ENCODE measurements at regions of chr7 and their contacts with region 1.

Region 1: DNA sequence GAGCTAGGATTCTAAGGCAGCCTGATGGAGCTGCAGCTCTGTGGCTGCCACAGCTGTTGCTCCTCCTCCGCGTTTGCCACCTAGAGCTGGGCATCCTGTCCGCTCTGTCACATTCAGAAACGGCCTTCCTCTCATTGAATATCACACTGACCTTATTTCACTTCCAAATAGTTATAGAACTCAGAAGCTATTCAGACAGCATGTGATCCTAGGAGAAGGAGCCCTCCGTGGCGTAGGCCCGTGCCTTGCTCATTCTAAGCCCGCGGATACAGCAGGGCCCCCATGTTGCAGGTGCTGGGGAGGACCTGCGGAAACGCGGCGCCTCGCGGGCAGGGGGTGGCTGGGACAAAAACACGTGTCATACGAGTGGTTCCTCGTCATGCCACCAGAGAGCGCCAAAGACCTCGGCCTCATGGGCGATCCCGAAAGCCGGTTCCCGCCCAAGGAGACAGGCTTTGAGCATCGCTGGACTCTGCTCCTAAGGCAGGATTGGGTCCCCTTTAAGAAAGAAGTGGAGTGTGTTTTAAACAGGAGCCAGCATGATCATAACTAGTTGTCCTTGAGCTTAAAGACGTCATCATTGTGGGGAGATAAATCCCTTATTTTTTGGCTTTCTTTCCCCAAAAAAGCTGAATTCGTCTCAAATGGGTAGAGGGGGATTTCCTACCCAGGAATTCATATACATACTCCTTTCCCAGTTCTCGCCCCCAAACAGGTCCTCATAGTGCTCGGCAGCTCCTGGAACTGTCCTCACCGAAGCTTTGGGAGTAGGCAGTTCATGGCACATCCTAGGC is 17.9 kb upstream of the FIGNL1 start:
- DNase-seq: peak; percentile 93
- H3K4me3 Mint-ChIP-seq: peak overlapping the region; percentile 25
- H3K27ac Mint-ChIP-seq: peak overlapping the region; percentile 13
- H3K4me1 Mint-ChIP-seq: no peaks in the 10 kb centered on the region
- H3K27me3 Mint-ChIP-seq: no peaks in the 10 kb centered on the region
- CTCF ChIP-seq: peak; percentile 96

Region 2: GRCh38 chr7:50577569-50577968 is 109.6 kb after region 1 on chr7:
- CTCF ChIA-PET with region 1: no interaction called
- intact Hi-C with region 1: no loop called
- DNase-seq: no peak
- H3K4me3 Mint-ChIP-seq: no peak overlapping the region
- H3K27ac Mint-ChIP-seq: no peak overlapping the region
- H3K4me1 Mint-ChIP-seq: no peaks in the 10 kb centered on the region
- H3K27me3 Mint-ChIP-seq: peaks cover 23% of the 10 kb centered on the region
- CTCF ChIP-seq: no peak

Region 3: GRCh38 chr7:50595491-50596102 is 127.6 kb after region 1 on chr7:
- CTCF ChIA-PET with region 1: interaction called, 6 read pairs
- intact Hi-C with region 1: loop called (anchors 2 kb)
- DNase-seq: peak; percentile 36
- H3K4me3 Mint-ChIP-seq: no peak overlapping the region
- H3K27ac Mint-ChIP-seq: no peak overlapping the region
- H3K4me1 Mint-ChIP-seq: peaks cover 15% of the 10 kb centered on the region
- H3K27me3 Mint-ChIP-seq: no peaks in the 10 kb centered on the region
- CTCF ChIP-seq: peak; percentile 32

Region 4: GRCh38 chr7:50632561-50633413 is 164.8 kb after region 1 on chr7:
- CTCF ChIA-PET with region 1: interaction called, 9 read pairs
- intact Hi-C with region 1: loop called (anchors 1 kb)
- DNase-seq: peak; percentile 80
- H3K4me3 Mint-ChIP-seq: no peak overlapping the region
- H3K27ac Mint-ChIP-seq: peak overlapping the region; percentile 23
- H3K4me1 Mint-ChIP-seq: peaks cover 26% of the 10 kb centered on the region
- H3K27me3 Mint-ChIP-seq: no peaks in the 10 kb centered on the region
- CTCF ChIP-seq: peak; percentile 98